Naive thymus-derived CD4-positive, alpha-beta T cell (primary cell): ENCODE measurements at regions of chr2 and their contacts with region 1.

Region 1: GRCh38 chr2:148524519-148524919 is 120.0 kb upstream of the EPC2 start:
- DNase-seq: peak in 8 of 9 donors; percentile 44 to 93 (median 86)
- ATAC-seq: peak; percentile 94
- H3K4me3 ChIP-seq: peak overlapping the region; percentile 28
- H3K4me3 Mint-ChIP-seq: peak overlapping the region; percentile 56 to 92 (median 76)
- H3K27ac ChIP-seq: peak overlapping the region; percentile 56
- H3K27ac Mint-ChIP-seq: peak overlapping the region; percentile 85 to 98 (median 94)
- H3K4me1 ChIP-seq: peaks cover 46 to 75% of the 10 kb centered on the region in 2 donors
- H3K4me1 Mint-ChIP-seq: peaks cover 58 to 90% (median 88%) of the 10 kb centered on the region in 7 donors
- H3K27me3 ChIP-seq: no peaks in the 10 kb centered on the region
- H3K27me3 Mint-ChIP-seq: no peaks in the 10 kb centered on the region

Region 2: DNA sequence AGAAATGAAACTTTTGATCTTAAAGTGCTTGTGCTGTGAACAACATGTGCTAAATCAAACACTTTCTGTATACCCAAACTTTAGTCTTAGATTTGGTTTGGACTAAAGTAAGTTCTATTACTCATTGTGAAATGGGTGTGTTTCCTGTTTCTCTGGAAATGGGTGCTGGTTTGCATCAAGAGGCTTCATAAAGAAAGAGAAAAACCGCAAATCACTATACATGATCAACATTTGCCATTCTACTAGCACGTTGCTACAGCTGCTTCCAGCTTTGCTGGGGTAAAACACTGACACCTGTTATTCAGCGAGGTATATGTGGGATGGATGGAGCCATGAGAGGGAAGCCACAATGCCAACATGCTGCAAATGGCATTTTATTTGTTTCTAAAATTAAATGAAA is 1226.7 kb before region 1 on chr2:
- CTCF ChIA-PET with region 1: no interaction called
- POLR2A ChIA-PET with region 1: no interaction called
- intact Hi-C with region 1: loop called (anchors 2 to 5 kb)
- DNase-seq: peak in 7 of 9 donors; percentile 13 to 63 (median 32)
- ATAC-seq: peak; percentile 76
- H3K4me3 ChIP-seq: no peak overlapping the region
- H3K4me3 Mint-ChIP-seq: peak overlapping the region in 8 of 10 donors; percentile 9 to 53 (median 38)
- H3K27ac ChIP-seq: no peak overlapping the region
- H3K27ac Mint-ChIP-seq: peak overlapping the region; percentile 53 to 94 (median 85)
- H3K4me1 ChIP-seq: peaks cover 18 to 26% of the 10 kb centered on the region in 2 donors
- H3K4me1 Mint-ChIP-seq: peaks cover 10 to 60% (median 29%) of the 10 kb centered on the region in 7 donors
- H3K27me3 ChIP-seq: no peaks in the 10 kb centered on the region
- H3K27me3 Mint-ChIP-seq: peaks cover 0 to 17% (median 0%) of the 10 kb centered on the region in 5 donors

Region 3: DNA sequence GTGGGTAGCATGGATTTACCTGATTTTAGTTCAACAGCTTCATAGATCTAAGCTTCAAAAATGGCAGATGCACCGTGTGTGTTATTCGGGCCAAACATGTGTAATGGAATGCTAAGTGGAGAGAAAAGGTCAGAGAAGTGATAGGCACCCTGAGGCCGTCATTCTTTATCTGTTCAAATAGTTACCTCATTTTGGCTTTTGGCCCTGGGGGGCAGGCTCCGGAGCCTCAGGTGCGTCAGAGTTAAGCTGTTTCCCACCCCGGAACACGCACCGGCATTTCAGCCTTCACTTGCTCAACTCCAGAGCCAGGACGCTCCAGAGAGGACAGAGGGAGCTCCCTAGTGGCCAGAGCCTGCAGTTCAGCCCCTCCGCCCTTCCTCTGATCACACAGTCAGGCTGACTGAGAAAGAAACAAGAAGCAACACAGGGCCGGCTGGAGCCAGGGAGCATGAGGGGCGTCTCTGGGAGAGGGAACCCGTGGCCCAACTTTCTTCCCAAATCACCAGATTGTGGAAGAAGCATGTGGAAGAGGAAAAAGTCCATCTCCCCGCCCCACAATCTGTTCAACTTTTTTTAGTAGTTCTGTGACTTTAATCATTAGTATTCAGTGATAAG is 15.1 kb before region 1 on chr2:
- CTCF ChIA-PET with region 1: interaction called, 19 read pairs
- POLR2A ChIA-PET with region 1: interaction called, 9 read pairs
- intact Hi-C with region 1: loop called (anchors 1 kb)
- DNase-seq: peak; percentile 54 to 86 (median 78)
- ATAC-seq: peak; percentile 100
- H3K4me3 ChIP-seq: peak overlapping the region; percentile 51
- H3K4me3 Mint-ChIP-seq: peak overlapping the region; percentile 65 to 91 (median 84)
- H3K27ac ChIP-seq: peak overlapping the region; percentile 37
- H3K27ac Mint-ChIP-seq: peak overlapping the region; percentile 13 to 90 (median 88)
- H3K4me1 ChIP-seq: no peaks in the 10 kb centered on the region
- H3K4me1 Mint-ChIP-seq: peaks cover 3 to 29% (median 16%) of the 10 kb centered on the region in 7 donors
- H3K27me3 ChIP-seq: no peaks in the 10 kb centered on the region
- H3K27me3 Mint-ChIP-seq: no peaks in the 10 kb centered on the region

Region 4: GRCh38 chr2:148545390-148546256 is 21.1 kb after region 1 on chr2:
- CTCF ChIA-PET with region 1: interaction called, 6 read pairs
- POLR2A ChIA-PET with region 1: interaction called, 38 read pairs
- intact Hi-C with region 1: loop called (anchors 1 to 2 kb)
- DNase-seq: peak in 1 of 9 donors; percentile 36
- ATAC-seq: peak; percentile 75
- H3K4me3 ChIP-seq: no peak overlapping the region
- H3K4me3 Mint-ChIP-seq: peak overlapping the region in 3 of 10 donors; percentile 32 to 58 (median 46)
- H3K27ac ChIP-seq: no peak overlapping the region
- H3K27ac Mint-ChIP-seq: peak overlapping the region in 4 of 9 donors; percentile 13 to 88 (median 44)
- H3K4me1 ChIP-seq: peaks cover 5 to 36% of the 10 kb centered on the region in 2 donors
- H3K4me1 Mint-ChIP-seq: peaks cover 22 to 70% (median 54%) of the 10 kb centered on the region in 7 donors
- H3K27me3 ChIP-seq: no peaks in the 10 kb centered on the region
- H3K27me3 Mint-ChIP-seq: peaks cover 0 to 2% (median 0%) of the 10 kb centered on the region in 5 donors

Region 5: DNA sequence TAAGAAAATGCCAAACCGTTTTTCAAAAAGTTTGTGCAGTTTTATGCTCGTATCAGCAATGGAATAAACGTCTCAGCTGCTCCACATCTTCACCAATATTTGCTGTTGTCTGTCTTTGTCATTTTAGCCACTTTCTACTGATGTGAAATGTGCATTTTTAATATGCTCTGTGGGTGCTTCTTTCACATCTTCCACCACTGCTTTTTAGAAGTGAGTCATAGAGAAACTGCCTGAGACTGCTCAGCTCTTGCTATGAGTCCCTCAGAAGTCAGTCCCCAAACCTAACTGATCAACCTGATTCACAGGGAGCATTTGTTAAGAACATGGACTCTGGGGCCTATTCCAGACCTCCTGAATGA is 79.0 kb after region 1 on chr2:
- CTCF ChIA-PET with region 1: no interaction called
- POLR2A ChIA-PET with region 1: no interaction called
- intact Hi-C with region 1: loop called in 1 of 2 experiments (anchors 2 kb)
- DNase-seq: no peak
- ATAC-seq: no peak
- H3K4me3 ChIP-seq: no peak overlapping the region
- H3K4me3 Mint-ChIP-seq: peak overlapping the region in 1 of 10 donors; percentile 17
- H3K27ac ChIP-seq: no peak overlapping the region
- H3K27ac Mint-ChIP-seq: peak overlapping the region in 1 of 9 donors; percentile 56
- H3K4me1 ChIP-seq: no peaks in the 10 kb centered on the region
- H3K4me1 Mint-ChIP-seq: peaks cover 0 to 16% (median 2%) of the 10 kb centered on the region in 7 donors
- H3K27me3 ChIP-seq: no peaks in the 10 kb centered on the region
- H3K27me3 Mint-ChIP-seq: peaks cover 0 to 5% (median 0%) of the 10 kb centered on the region in 5 donors

Region 6: GRCh38 chr2:148764815-148765214 is 240.3 kb after region 1 on chr2:
- CTCF ChIA-PET with region 1: no interaction called
- POLR2A ChIA-PET with region 1: no interaction called
- intact Hi-C with region 1: loop called in 1 of 2 experiments (anchors 5 kb)
- DNase-seq: peak in 7 of 9 donors; percentile 33 to 64 (median 47)
- ATAC-seq: peak; percentile 92
- H3K4me3 ChIP-seq: no peak overlapping the region
- H3K4me3 Mint-ChIP-seq: peak overlapping the region in 7 of 10 donors; percentile 37 to 73 (median 64)
- H3K27ac ChIP-seq: no peak overlapping the region
- H3K27ac Mint-ChIP-seq: peak overlapping the region in 5 of 9 donors; percentile 26 to 72 (median 57)
- H3K4me1 ChIP-seq: peaks cover 0 to 12% of the 10 kb centered on the region in 2 donors
- H3K4me1 Mint-ChIP-seq: peaks cover 6 to 70% (median 53%) of the 10 kb centered on the region in 7 donors
- H3K27me3 ChIP-seq: no peaks in the 10 kb centered on the region
- H3K27me3 Mint-ChIP-seq: no peaks in the 10 kb centered on the region

Region 7: GRCh38 chr2:149587220-149587949 is 1062.9 kb after region 1 on chr2 and contains the start of gene MMADHC:
- CTCF ChIA-PET with region 1: no interaction called
- POLR2A ChIA-PET with region 1: no interaction called
- intact Hi-C with region 1: loop called in 1 of 2 experiments (anchors 5 kb)
- DNase-seq: peak; percentile 83 to 93 (median 91)
- ATAC-seq: peak; percentile 98
- H3K4me3 ChIP-seq: peak within 1 kb of the TSS; percentile 97
- H3K4me3 Mint-ChIP-seq: peak within 1 kb of the TSS; percentile 95 to 99 (median 97)
- H3K27ac ChIP-seq: peak within 1 kb of the TSS; percentile 93
- H3K27ac Mint-ChIP-seq: peak within 1 kb of the TSS; percentile 95 to 100 (median 99)
- H3K4me1 ChIP-seq: peaks cover 23 to 39% of the 10 kb centered on the region in 2 donors
- H3K4me1 Mint-ChIP-seq: peaks cover 27 to 58% (median 50%) of the 10 kb centered on the region in 7 donors
- H3K27me3 ChIP-seq: no peaks in the 10 kb centered on the region
- H3K27me3 Mint-ChIP-seq: peaks cover 22 to 30% (median 30%) of the 10 kb centered on the region in 5 donors
- total RNA-seq, gene MMADHC: 53.3 to 93.4 (median 66.6) TPM